BJ (cell line): ENCODE measurements at regions of chr11 and their contacts with region 1.

Region 1: DNA sequence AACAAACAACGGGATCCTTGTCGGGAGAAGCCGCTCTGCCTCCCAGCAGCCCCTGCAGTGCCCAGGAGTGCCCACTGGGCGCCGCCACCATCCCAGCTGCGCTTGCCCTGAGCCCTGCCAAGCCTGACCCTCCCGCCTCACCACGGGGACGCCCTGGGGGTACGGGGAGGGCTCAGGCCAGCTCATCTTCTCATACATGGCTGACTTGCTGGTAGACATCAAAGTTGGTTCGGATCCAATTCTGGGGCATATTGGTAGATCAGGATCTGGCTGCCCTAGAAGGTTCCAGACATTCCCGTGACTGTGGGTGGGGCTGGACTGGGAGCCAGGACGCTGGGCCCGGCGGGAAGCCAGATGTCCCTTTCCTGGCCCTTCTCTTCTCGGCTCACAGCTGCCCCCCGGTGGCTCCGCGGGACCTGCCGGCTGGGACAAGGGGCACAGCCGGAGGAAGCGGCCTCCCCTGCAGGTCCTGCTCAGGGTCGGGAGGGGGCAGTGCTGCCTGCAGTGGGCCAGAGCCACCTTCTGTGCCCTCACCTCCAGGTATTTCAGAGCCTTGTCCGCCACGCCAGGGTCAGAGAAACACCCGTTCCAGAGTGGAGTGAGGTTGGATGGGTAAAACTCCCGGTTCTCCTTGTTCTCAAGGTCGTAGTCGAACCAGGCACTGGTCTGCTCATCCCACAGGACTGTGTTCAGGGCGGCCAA is 10.6 kb upstream of the TREH start:
- DNase-seq: peak; percentile 65
- H3K4me3 ChIP-seq: peak overlapping the region; percentile 19
- H3K27me3 ChIP-seq: no peaks in the 10 kb centered on the region
- CTCF ChIP-seq: peak; percentile 86

Region 2: DNA sequence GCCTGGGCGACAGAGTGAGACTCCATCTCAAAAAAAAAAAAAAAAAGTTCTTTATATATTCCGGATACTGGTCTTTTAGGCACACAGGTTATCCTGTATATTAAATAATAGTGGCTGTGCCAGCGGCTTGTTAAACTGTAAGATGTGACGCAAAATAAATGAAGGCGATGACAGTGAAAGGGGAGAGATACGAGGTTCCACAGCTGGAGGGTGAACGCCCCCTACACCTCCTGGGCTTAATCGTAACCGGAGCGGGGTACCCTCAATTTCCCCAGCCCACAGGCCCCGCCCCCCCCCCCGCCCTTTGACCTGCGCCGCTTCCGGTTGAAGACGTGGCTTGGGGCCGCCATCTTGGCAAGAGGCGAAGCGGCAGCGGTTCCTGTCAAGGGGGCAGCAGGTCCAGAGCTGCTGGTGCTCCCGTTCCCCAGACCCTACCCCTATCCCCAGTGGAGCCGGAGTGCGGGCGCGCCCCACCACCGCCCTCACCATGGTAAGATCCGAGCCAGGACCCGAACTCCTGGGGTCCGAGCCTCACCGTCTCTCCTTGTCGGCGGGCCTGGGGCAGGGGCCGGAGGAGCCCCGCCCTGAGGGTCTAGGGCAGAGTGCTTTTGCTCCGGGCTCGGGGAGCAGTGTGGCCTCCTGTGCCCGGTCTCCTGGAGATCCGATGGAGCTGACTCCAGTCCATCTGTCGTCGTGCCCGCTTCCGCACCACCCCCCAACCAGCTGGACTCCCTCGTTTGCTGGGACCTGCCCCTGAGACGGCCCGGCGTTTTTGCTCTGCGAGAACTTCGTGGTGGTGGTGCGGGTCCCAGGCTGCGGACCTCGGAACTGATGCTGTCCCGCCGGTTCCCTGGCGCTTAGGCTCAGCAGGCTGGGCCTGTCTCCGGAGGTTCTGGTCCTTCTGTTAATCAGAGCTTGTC is 117.7 kb before region 1 on chr11 and contains the start of gene ARCN1:
- CTCF ChIA-PET with region 1: no interaction called
- POLR2A ChIA-PET with region 1: no interaction called
- DNase-seq: no peak
- H3K4me3 ChIP-seq: peak within 1 kb of the TSS; percentile 99
- H3K27me3 ChIP-seq: no peaks in the 10 kb centered on the region
- CTCF ChIP-seq: no peak
- polyA plus RNA-seq, gene ARCN1: 206 and 286 TPM in 2 replicates

Region 3: GRCh38 chr11:118640332-118641154 is 49.5 kb before region 1 on chr11:
- CTCF ChIA-PET with region 1: no interaction called
- POLR2A ChIA-PET with region 1: no interaction called
- DNase-seq: no peak
- H3K4me3 ChIP-seq: no peak overlapping the region
- H3K27me3 ChIP-seq: no peaks in the 10 kb centered on the region
- CTCF ChIP-seq: no peak

Region 4: DNA sequence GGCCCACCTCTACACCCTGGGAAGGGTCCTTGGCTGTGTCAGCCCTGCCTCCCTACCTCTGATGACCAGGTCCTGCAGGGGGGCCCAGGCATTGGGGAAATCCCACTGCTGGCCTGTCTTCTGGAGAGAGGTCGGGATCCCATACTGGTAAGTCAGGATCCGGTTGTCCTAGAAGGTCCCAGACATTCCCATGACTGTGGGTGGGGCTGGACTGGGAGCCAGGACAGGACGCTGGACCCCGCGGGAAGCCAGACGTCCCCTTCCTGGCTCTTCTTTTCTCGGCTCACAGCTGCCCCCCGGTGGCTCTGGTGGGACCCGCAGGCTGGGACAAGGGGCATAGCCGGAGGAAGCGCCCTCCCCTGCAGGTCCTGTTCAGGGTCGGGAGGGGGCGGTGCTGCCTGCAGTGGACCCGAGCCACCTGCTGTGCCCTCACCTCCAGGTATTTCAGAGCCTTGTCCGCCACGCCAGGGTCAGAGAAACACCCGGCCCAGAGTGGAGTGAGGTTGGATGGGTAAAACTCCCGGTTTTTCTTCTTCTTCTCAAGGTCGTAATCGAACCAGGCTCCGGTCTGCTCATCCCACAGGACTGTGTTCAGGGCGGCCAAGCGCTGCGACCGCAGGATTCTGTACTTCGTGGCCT is 30.6 kb before region 1 on chr11:
- CTCF ChIA-PET with region 1: interaction called, 18 read pairs
- POLR2A ChIA-PET with region 1: no interaction called
- DNase-seq: no peak
- H3K4me3 ChIP-seq: no peak overlapping the region
- H3K27me3 ChIP-seq: no peaks in the 10 kb centered on the region
- CTCF ChIP-seq: peak; percentile 99

Region 5: GRCh38 chr11:118705111-118705741 is 15.2 kb after region 1 on chr11:
- CTCF ChIA-PET with region 1: interaction called, 41 read pairs
- POLR2A ChIA-PET with region 1: no interaction called
- DNase-seq: no peak
- H3K4me3 ChIP-seq: no peak overlapping the region
- H3K27me3 ChIP-seq: peaks cover 7% of the 10 kb centered on the region
- CTCF ChIP-seq: no peak

Region 6: DNA sequence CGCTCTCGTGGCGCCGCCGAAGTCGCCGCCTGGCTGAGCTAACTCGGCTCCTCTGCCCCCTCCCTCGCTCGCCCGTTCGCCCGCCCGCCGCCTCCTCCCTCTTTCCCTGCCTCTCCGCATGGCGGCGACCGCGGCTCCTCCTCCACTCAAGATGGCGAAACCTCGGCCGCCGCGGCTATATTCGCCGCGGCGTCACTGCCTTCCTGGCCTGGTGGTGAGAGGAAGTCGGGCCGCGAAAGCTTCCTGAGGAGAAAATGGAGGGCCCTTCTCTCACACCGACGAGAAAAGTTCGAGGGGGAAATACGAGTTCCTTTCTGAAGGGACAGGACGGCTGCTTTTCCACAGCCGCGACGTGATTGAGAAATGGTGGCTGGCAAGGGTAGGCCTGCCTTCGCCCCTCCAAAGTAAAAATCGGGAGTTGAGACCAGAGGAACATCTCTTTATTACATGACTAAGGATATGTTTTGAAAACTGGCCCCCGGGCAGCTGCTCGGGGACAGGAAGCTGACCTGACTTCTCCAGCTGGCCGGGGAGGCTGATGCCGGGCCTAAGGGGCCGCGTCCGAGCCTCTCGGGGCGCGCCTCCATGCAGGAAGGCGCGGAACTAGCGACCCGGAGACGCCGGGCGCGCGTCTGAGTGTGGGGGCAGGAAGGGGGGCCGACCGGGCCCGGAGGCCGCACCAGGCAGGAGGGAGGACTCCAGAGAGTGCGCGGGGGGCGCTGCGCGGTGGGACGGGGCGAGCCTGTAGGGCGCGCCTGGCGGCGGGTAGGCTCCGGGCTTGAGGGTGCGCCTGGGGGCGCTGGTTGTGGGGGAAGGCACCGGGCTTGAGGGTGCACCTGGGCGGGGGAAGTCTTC is 101.3 kb after region 1 on chr11 and contains the start of gene DDX6:
- CTCF ChIA-PET with region 1: interaction called, 51 read pairs
- POLR2A ChIA-PET with region 1: interaction called, 4 read pairs
- DNase-seq: peak; percentile 26
- H3K4me3 ChIP-seq: peak within 1 kb of the TSS; percentile 93
- H3K27me3 ChIP-seq: no peaks in the 10 kb centered on the region
- CTCF ChIP-seq: peak; percentile 50
- polyA plus RNA-seq, gene DDX6: 23.7 and 49.8 TPM in 2 replicates

Region 7: DNA sequence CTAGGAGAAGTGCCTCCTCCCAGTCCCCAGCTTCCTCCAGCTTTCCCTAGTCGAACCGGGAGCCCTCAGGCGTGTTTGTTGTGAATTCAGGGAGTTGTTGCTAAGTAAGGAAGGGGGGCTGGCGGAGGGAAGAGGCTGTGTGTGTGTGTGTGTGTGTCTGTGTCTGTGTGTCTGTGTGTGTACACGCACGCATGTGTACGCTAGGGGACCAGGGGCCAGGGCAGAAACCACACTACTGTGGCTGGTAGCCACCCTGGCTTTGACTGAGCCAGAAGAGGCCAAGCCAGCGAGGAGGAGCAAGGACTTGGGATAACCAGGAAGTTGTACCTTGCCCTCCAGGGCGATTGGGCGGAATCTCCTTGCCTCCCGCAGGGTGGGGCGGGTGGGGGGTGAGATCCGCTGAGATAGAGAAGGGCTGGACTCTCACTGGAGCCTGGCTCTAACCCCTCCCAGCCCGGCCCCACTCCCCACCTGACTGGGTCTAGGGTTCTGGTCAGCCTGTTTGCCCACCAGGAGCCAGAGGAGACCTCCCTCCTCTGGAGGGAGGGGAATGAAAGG is 228.2 kb after region 1 on chr11:
- CTCF ChIA-PET with region 1: interaction called, 12 read pairs
- POLR2A ChIA-PET with region 1: no interaction called
- DNase-seq: peak; percentile 87
- H3K4me3 ChIP-seq: peak overlapping the region; percentile 38
- H3K27me3 ChIP-seq: no peaks in the 10 kb centered on the region
- CTCF ChIP-seq: no peak

Region 8: DNA sequence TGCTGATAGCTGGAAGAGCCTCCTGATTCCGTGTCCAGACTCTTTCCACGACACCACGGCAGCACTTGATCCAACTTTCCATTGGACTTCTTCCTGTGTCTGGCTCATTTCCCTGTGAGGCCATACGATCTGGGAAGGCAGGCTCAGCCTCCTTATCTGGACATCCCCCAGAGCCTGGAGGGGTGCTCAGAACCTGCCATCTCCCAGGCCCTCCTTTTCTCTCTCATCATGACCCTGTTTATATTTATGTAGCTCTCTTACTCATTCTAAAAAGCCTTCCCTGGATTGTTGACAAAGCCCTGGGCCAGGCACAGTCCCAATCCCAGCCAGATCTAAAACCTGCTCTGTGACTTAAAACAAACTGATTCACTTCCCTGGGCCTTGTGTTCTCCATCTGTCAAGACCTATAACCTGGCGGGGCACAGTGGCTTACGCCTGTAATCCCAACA is 243.5 kb after region 1 on chr11:
- CTCF ChIA-PET with region 1: interaction called, 108 read pairs
- POLR2A ChIA-PET with region 1: no interaction called
- DNase-seq: no peak
- H3K4me3 ChIP-seq: no peak overlapping the region
- H3K27me3 ChIP-seq: peaks cover 2% of the 10 kb centered on the region; the same call in 1 of the 2 replicates
- CTCF ChIP-seq: no peak

Region 9: DNA sequence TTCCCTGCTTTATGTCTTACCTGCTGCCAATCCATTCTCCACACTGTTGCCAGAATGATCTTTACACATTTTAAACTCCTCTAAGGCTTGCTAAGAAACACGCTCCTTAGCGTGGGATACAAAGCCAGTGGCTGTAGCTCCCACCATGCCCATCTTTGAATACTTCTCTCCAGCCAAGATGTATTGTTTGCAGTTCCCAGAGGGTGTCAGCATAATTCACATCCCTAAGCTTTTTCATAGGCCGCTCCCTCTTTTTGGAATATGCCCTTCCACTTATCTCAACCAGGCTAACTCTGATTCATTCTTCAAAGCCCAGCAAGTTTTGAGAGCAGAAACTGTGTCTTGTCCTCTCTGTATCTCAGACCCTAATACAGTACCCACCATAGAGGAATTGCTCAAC is 258.0 kb after region 1 on chr11:
- CTCF ChIA-PET with region 1: interaction called, 136 read pairs
- POLR2A ChIA-PET with region 1: no interaction called
- DNase-seq: no peak
- H3K4me3 ChIP-seq: no peak overlapping the region
- H3K27me3 ChIP-seq: peaks cover 20% of the 10 kb centered on the region
- CTCF ChIP-seq: no peak